B cell (primary cell): ENCODE measurements at regions of chr19 and their contacts with region 1.

Region 1: GRCh38 chr19:40798223-40798996 is 581 bp upstream of the EGLN2 start:
- DNase-seq: peak; percentile 100
- ATAC-seq: peak; percentile 83
- H3K4me3 ChIP-seq: peak overlapping the region; percentile 59 to 84 (median 67)
- H3K4me3 Mint-ChIP-seq: peak overlapping the region; percentile 90
- H3K27ac ChIP-seq: peak overlapping the region; percentile 85 to 90
- H3K27ac Mint-ChIP-seq: peak overlapping the region; percentile 98
- H3K4me1 ChIP-seq: peaks cover 49% of the 10 kb centered on the region in 2 donors
- H3K4me1 Mint-ChIP-seq: peaks cover 53% of the 10 kb centered on the region
- H3K27me3 ChIP-seq: no peaks in the 10 kb centered on the region
- H3K27me3 Mint-ChIP-seq: no peaks in the 10 kb centered on the region
- CTCF ChIP-seq: peak; percentile 56

Region 2: DNA sequence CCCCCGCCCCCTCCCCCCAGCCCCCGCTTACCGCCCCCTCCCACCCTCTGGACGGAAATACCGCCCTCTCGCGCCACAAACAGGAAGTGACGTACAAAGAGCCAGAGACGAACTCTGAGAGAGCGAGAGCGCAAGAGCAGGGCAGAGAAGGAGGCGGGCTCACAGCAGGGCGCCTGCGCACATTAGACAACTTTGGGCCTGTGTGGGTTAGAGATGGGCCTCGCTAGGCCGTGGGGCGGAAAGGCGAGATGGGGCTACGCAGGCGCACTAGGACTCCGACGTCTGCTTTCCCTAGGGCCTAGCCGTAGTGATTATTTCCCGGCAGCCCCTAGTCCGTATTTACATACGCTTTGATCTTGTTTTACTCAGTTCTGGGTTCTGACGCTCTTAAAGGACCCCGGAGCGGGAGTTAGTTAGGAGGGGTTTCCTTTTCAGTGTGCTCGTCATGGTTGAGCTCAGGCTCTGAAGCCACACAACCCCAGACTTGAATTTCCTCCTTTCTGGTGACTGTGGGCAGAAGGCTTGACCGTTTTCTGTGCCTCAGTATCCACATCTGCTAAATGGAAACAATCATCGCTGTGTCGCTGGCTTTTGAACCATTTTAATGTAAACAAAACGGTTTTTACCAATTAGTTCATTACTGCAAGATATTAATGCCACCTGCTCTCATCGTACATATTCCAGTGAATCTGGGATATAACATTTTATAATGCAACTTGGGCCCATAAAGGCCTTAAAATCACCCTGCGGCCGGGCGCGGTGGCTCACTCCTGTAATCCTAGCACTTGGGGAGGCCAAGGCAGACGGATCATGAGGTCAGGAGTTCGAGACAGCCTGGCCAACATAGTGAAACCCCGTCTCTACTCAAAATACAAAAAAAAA is 512.8 kb before region 1 on chr19:
- CTCF ChIA-PET with region 1: no interaction called
- POLR2A ChIA-PET with region 1: no interaction called
- intact Hi-C with region 1: loop called (anchors 2 kb)
- DNase-seq: peak; percentile 100
- ATAC-seq: peak; percentile 74
- H3K4me3 ChIP-seq: peak overlapping the region in 4 of 5 experiments; percentile 68 to 89 (median 78)
- H3K4me3 Mint-ChIP-seq: peak overlapping the region; percentile 87
- H3K27ac ChIP-seq: peak overlapping the region; percentile 99 to 100
- H3K27ac Mint-ChIP-seq: peak overlapping the region; percentile 97
- H3K4me1 ChIP-seq: peaks cover 40 to 54% of the 10 kb centered on the region in 2 donors
- H3K4me1 Mint-ChIP-seq: peaks cover 53% of the 10 kb centered on the region
- H3K27me3 ChIP-seq: no peaks in the 10 kb centered on the region
- H3K27me3 Mint-ChIP-seq: no peaks in the 10 kb centered on the region
- CTCF ChIP-seq: no peak

Region 3: DNA sequence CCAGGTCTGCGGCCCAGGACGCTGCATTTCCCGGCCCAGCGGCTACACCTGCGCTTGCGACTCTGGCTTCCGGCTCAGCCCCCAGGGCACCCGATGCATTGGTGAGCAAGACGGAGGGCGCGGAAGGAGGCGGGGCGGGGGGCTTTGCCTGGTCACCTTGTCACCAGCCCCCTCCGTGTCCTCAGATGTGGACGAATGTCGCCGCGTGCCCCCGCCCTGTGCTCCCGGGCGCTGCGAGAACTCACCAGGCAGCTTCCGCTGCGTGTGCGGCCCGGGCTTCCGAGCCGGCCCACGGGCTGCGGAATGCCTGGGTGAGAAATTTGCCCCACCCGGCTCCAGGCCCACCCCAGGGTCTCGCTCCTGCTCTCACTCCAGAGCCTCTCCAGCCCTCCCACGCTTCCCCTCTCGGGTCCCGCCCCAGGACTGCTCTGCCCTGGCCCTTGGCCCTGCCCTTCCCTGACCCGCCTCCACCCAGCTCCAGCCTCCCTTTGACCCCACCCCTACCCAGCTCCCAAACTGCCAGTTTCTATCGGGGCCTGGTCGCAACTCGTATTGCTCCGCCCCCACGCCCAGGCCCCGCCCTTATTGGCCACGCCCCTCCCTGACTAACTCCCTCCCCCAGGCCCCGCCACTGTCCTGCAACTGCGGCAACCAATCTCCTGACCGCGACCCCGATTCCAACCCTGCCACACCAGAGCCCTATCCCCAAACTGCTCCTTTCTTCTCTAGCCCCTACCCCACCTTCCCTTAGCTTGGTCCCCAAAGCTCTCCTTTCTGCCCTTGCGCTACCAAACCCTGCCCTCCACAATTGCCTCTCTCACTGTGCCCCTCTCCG is 188.6 kb before region 1 on chr19:
- CTCF ChIA-PET with region 1: no interaction called
- POLR2A ChIA-PET with region 1: interaction called, 5 read pairs
- intact Hi-C with region 1: loop called (anchors 5 kb)
- DNase-seq: peak; percentile 90
- ATAC-seq: peak; percentile 57
- H3K4me3 ChIP-seq: peak overlapping the region in 4 of 5 experiments; percentile 49 to 72 (median 62)
- H3K4me3 Mint-ChIP-seq: peak overlapping the region; percentile 92
- H3K27ac ChIP-seq: peak overlapping the region; percentile 83 to 93
- H3K27ac Mint-ChIP-seq: peak overlapping the region; percentile 98
- H3K4me1 ChIP-seq: peaks cover 38 to 58% of the 10 kb centered on the region in 2 donors
- H3K4me1 Mint-ChIP-seq: peaks cover 56% of the 10 kb centered on the region
- H3K27me3 ChIP-seq: no peaks in the 10 kb centered on the region
- H3K27me3 Mint-ChIP-seq: no peaks in the 10 kb centered on the region
- CTCF ChIP-seq: no peak

Region 4: DNA sequence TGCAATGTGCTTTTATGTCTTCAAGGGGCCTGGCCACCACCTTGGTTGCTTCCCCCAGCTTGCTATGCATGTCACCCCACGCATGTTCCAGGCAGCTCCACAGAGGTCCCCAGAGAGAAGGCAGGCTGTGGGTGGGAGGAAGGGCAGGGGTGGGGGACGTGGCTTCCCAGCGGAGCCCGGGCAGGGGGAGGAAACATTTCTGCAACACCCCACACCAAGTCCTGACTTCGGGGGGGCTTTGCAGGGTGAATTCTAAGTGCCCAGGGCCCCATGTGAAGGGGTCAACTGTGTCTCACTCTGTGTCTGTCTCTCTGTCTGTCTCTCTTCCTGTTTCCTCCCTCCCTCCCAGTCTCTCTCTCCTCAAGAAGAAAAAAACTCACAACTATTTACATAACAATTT is 157.7 kb before region 1 on chr19:
- CTCF ChIA-PET with region 1: no interaction called
- POLR2A ChIA-PET with region 1: no interaction called
- intact Hi-C with region 1: no loop called
- DNase-seq: no peak
- ATAC-seq: no peak
- H3K4me3 ChIP-seq: no peak overlapping the region
- H3K4me3 Mint-ChIP-seq: no peak overlapping the region
- H3K27ac ChIP-seq: no peak overlapping the region
- H3K27ac Mint-ChIP-seq: no peak overlapping the region
- H3K4me1 ChIP-seq: peaks cover 5 to 8% of the 10 kb centered on the region in 2 donors
- H3K4me1 Mint-ChIP-seq: peaks cover 9% of the 10 kb centered on the region
- H3K27me3 ChIP-seq: peaks cover 0 to 3% (median 0%) of the 10 kb centered on the region in 4 experiments
- H3K27me3 Mint-ChIP-seq: peaks cover 3% of the 10 kb centered on the region
- CTCF ChIP-seq: no peak

Region 5: GRCh38 chr19:40724855-40725254 is 73.6 kb before region 1 on chr19:
- CTCF ChIA-PET with region 1: no interaction called
- POLR2A ChIA-PET with region 1: no interaction called
- intact Hi-C with region 1: no loop called
- DNase-seq: no peak
- ATAC-seq: no peak
- H3K4me3 ChIP-seq: no peak overlapping the region
- H3K4me3 Mint-ChIP-seq: no peak overlapping the region
- H3K27ac ChIP-seq: no peak overlapping the region
- H3K27ac Mint-ChIP-seq: no peak overlapping the region
- H3K4me1 ChIP-seq: peaks cover under 1 to 9% of the 10 kb centered on the region in 2 donors
- H3K4me1 Mint-ChIP-seq: peaks cover 25% of the 10 kb centered on the region
- H3K27me3 ChIP-seq: no peaks in the 10 kb centered on the region
- H3K27me3 Mint-ChIP-seq: no peaks in the 10 kb centered on the region
- CTCF ChIP-seq: no peak

Region 6: GRCh38 chr19:40813182-40813958 is 15.0 kb after region 1 on chr19:
- CTCF ChIA-PET with region 1: interaction called, 39 read pairs
- POLR2A ChIA-PET with region 1: interaction called, 6 read pairs
- intact Hi-C with region 1: loop called (anchors 2 kb)
- DNase-seq: no peak
- ATAC-seq: no peak
- H3K4me3 ChIP-seq: no peak overlapping the region
- H3K4me3 Mint-ChIP-seq: peak overlapping the region; percentile 97
- H3K27ac ChIP-seq: no peak overlapping the region
- H3K27ac Mint-ChIP-seq: no peak overlapping the region
- H3K4me1 ChIP-seq: peaks cover 13 to 35% of the 10 kb centered on the region in 2 donors
- H3K4me1 Mint-ChIP-seq: peaks cover 35% of the 10 kb centered on the region
- H3K27me3 ChIP-seq: no peaks in the 10 kb centered on the region
- H3K27me3 Mint-ChIP-seq: no peaks in the 10 kb centered on the region
- CTCF ChIP-seq: no peak